Heart right ventricle (tissue), 16 donors: ENCODE measurements at regions of chr2 and their contacts with region 1.

Region 1: GRCh38 chr2:46632349-46632748 is 153.0 kb downstream of the TMEM247 start:
- DNase-seq: no peak
- ATAC-seq: peak in 1 of 8 donors; percentile 33
- H3K4me3 ChIP-seq: no peak overlapping the region
- H3K27ac ChIP-seq: no peak overlapping the region
- H3K4me1 ChIP-seq: no peaks in the 10 kb centered on the region
- H3K27me3 ChIP-seq: no peaks in the 10 kb centered on the region
- CTCF ChIP-seq: peak in 8 of 9 donors; percentile 43 to 74 (median 66)

Region 2: DNA sequence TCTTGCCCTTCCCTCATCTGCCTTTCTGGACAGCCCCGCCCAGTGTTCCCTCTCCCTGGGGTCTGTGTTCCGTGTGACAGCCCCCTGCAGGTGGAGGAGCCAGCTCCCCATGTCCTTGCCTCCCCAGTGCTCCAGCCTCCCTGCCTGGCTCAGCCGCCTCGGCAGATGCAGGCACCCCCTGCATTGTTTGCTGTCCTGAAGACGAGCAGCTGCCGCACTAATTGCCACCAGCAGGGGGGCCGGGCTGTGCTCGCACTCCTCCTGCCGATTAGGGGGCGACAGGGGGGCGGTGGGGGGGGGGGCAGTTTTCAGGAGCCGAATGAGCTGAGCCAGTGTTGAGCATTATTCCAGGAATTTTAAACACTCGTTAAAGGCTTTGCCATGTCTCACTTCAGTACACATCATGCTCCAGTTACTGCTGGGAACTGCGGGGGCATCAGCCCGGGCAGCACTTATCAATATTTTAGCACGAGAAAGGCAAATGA is 1667.6 kb before region 1 on chr2:
- intact Hi-C with region 1: loop called in 1 of 10 experiments (anchors 5 kb)
- DNase-seq: no peak
- ATAC-seq: no peak
- H3K4me3 ChIP-seq: no peak overlapping the region
- H3K27ac ChIP-seq: no peak overlapping the region
- H3K4me1 ChIP-seq: peaks cover 0 to 11% (median 0%) of the 10 kb centered on the region in 9 donors
- H3K27me3 ChIP-seq: peaks cover 0 to 67% (median 46%) of the 10 kb centered on the region in 7 donors
- CTCF ChIP-seq: peak in 2 of 9 donors; percentile 6 to 21

Region 3: DNA sequence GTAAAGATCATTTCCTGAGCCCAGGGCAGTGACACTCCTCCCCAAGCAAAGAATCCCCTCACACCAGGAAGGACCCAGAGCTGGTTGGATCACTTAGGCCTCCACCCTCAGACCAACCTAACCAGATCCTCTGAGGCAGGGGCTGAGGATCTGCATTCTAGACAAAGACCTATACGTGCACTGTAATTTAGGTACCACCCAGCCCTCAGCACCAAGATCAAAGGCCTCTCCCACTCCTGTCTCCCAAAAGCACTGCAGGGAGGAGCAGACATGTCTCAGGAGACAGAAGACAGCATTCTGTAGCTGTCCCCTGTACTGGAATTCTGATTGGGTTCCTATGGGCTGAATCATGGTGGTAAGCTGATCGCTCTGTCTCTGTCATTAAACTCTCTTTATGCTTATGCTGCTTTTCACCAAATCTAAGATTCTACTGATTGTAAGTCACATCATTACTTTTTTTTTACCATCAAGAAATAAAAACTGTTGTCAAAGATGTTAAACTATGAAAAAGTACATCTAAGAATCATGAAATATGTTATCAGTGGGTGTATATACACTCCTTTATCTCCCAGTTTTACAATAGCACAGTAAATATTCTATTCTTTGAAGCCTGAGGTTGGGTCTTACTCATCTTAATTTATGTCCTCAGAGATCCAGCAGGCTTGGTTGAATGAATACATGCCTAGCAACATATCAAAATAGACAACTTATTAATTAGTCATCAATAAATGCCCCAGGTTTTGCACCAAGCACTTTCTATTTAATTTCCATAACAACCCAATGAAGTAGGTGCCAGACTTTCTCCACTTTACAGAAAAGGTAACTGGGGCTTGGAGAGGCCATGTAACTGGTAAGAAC is 254.9 kb after region 1 on chr2:
- intact Hi-C with region 1: loop called in 9 of 10 experiments (anchors 1 to 5 kb)
- DNase-seq: no peak
- ATAC-seq: no peak
- H3K4me3 ChIP-seq: no peak overlapping the region
- H3K27ac ChIP-seq: peak overlapping the region in 5 of 10 donors; percentile 29 to 73 (median 49)
- H3K4me1 ChIP-seq: peaks cover 0 to 40% (median 12%) of the 10 kb centered on the region in 9 donors
- H3K27me3 ChIP-seq: no peaks in the 10 kb centered on the region
- CTCF ChIP-seq: no peak